ENCODE measurements at regions of chr11 and their contacts with region 1.

Region 1: GRCh38 chr11:107770551-107770951 is 58.7 kb upstream of the SLN start:
- DNase-seq: no peak
- ATAC-seq: no peak
- H3K4me3 ChIP-seq: no peak overlapping the region
- H3K27ac ChIP-seq: no peak overlapping the region
- H3K4me1 ChIP-seq: no peaks in the 10 kb centered on the region; a peak in 1 of 5 replicates
- H3K27me3 ChIP-seq: peaks cover 0 to 14% of the 10 kb centered on the region in 2 experiments; a peak in 2 of 5 replicates
- CTCF ChIP-seq: no peak
- EP300 ChIP-seq: no peak
- POLR2A ChIP-seq: no peak
- RAD21 ChIP-seq: no peak

Region 2: DNA sequence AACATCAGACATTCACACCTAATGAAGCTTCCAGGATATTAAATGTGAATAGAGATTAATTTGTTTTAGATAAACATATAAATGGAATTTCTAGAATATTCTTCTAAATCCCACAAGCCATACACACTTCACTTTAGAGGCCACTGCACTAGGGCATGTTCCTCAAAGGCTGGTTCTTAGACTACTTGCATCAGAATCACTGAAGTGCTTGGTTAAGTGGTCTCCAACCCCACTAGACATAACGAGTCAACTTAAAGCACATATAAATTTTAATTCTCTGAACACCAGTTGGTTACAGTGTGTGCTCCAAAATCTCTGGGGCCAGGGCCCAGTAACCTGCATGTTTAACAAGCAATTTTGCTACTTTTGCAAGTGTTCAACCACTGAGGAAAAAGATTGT is 197.1 kb before region 1 on chr11:
- CTCF ChIA-PET with region 1: interaction called, 3 read pairs
- POLR2A ChIA-PET with region 1: no interaction called
- in situ Hi-C with region 1: no loop called
- intact Hi-C with region 1: loop called (anchors 5 kb)
- DNase-seq: no peak
- ATAC-seq: no peak
- H3K4me3 ChIP-seq: no peak overlapping the region
- H3K27ac ChIP-seq: no peak overlapping the region
- H3K4me1 ChIP-seq: peaks cover 0 to 4% of the 10 kb centered on the region in 2 experiments; a peak in 1 of 5 replicates
- H3K27me3 ChIP-seq: no peaks in the 10 kb centered on the region
- CTCF ChIP-seq: no peak
- EP300 ChIP-seq: no peak
- POLR2A ChIP-seq: no peak
- RAD21 ChIP-seq: no peak

Region 3: DNA sequence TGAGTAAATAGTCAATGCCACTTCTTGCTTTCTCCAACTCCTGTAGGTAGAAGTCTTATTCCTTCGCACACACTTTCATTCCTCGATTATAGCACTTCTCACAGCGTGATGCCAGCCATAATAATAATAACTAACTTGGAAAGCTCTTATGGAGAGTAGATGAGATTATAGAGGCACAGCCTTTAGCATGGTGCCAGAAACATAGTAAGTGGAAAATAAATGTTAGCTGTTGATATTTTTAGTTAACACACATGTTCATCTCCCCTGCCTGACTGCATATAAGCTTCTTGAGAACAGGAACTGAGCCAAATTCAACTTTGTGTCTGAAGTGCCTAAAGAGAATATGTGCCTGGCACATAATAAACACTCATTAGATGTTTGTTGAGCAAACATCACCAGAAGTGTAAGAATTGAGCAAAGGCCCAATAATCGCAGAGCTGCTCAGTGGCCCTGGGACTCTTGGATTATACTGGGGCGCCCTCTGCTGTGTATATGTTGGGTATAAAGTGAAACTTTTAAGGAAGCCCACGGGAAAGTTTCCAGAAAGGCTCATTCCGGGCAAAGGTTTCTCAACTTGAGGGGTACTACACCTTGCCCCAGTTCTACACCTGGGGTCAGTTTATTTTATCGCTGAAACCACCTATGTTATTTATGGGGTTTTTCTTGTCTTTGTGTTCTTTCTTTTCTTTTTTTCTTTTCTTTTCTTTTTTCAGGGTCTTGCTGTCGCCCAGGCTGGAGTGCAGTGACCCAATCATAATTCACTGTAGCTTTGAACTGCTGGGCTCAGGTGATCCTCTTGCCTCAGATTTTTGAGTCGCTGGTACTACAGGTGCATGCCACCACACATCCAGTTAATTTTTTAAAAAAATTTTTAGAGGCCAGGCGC is 81.0 kb before region 1 on chr11:
- CTCF ChIA-PET with region 1: no interaction called
- POLR2A ChIA-PET with region 1: no interaction called
- in situ Hi-C with region 1: no loop called
- intact Hi-C with region 1: loop called (anchors 10 kb)
- DNase-seq: peak; percentile 33 to 78 (median 46)
- ATAC-seq: peak; percentile 94
- H3K4me3 ChIP-seq: no peak overlapping the region
- H3K27ac ChIP-seq: no peak overlapping the region
- H3K4me1 ChIP-seq: no peaks in the 10 kb centered on the region
- H3K27me3 ChIP-seq: no peaks in the 10 kb centered on the region
- CTCF ChIP-seq: peak; percentile 64 to 86 (median 79)
- EP300 ChIP-seq: no peak
- POLR2A ChIP-seq: no peak
- RAD21 ChIP-seq: peak; percentile 93 to 95

Region 4: DNA sequence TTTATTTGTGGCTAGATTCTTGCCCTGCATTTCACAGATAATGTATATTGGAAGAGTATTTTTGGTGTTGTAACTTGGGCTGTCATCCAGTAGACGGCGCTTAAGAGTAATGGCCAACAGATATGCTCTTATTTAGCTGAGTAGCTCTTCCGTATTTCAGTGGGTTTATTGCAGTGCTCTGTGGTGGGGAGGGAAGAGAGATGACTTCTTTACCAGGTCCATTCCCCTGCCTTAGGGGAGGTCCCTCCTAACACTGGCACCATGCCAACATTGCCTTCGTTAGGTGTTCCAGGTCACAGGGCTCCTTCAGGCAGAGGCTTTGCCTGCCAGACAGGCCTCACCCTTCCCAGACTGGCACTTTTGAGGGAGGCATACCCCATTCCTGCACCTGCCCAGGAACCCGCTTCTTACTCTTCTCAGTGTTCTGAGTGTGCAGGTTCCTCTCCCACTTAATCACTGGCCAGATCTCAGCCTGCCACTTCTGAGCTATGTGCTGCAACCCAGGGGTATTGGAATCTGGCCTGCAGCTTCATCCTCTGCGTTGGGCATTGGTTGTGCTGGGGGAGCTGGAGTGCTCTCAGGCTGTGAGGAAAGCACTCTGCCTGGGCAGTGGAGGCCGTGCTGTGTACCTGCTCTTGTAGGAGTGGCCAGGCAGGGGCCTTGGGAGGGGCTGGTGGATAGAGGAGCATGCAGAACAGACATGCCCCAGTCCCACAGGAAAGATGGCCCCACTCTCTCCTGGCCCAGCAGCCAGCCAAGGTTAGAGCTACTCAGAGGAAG is 29.3 kb before region 1 on chr11:
- CTCF ChIA-PET with region 1: no interaction called
- POLR2A ChIA-PET with region 1: no interaction called
- in situ Hi-C with region 1: no loop called
- intact Hi-C with region 1: loop called (anchors 1 kb)
- DNase-seq: peak; percentile 19 to 68 (median 35)
- ATAC-seq: peak; percentile 96
- H3K4me3 ChIP-seq: no peak overlapping the region
- H3K27ac ChIP-seq: no peak overlapping the region
- H3K4me1 ChIP-seq: no peaks in the 10 kb centered on the region
- H3K27me3 ChIP-seq: no peaks in the 10 kb centered on the region; a peak in 1 of 5 replicates
- CTCF ChIP-seq: peak; percentile 79 to 87 (median 85)
- EP300 ChIP-seq: no peak
- POLR2A ChIP-seq: no peak
- RAD21 ChIP-seq: peak; percentile 59 to 90

Region 5: DNA sequence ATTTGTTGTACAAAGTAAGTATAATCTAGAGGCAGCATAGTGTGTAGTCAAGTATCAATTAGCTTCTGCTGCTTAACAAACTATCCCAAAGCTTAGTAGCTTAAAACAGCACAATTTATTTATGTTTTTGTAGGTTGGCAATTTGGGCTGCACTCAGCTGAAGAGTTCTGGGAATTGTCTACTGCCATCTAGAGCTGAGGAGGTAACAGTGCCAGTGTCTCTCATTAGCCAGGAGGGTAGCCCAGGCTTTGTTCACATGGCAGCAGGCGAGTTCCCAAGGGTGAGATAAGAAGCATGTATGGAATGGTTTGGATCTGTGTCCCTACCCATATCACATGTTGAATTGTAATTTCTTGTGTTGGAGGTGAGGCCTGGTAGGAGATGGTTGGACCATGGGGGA is 12.9 kb before region 1 on chr11:
- CTCF ChIA-PET with region 1: no interaction called
- POLR2A ChIA-PET with region 1: no interaction called
- in situ Hi-C with region 1: no loop called
- intact Hi-C with region 1: no loop called
- DNase-seq: no peak
- ATAC-seq: peak; percentile 65; the same call in 2 of the 3 replicates
- H3K4me3 ChIP-seq: no peak overlapping the region
- H3K27ac ChIP-seq: no peak overlapping the region
- H3K4me1 ChIP-seq: peaks cover 4 to 7% of the 10 kb centered on the region in 2 experiments; a peak in 3 of 5 replicates
- H3K27me3 ChIP-seq: no peaks in the 10 kb centered on the region
- CTCF ChIP-seq: peak in 1 of 3 experiments; percentile 18; a peak in 1 of 6 replicates
- EP300 ChIP-seq: no peak
- POLR2A ChIP-seq: no peak
- RAD21 ChIP-seq: no peak

Region 6: GRCh38 chr11:107882095-107882820 is 111.7 kb after region 1 on chr11:
- CTCF ChIA-PET with region 1: no interaction called
- POLR2A ChIA-PET with region 1: no interaction called
- in situ Hi-C with region 1: no loop called
- intact Hi-C with region 1: no loop called
- DNase-seq: peak in 1 of 4 experiments; percentile 6
- ATAC-seq: no peak
- H3K4me3 ChIP-seq: no peak overlapping the region
- H3K27ac ChIP-seq: no peak overlapping the region
- H3K4me1 ChIP-seq: no peaks in the 10 kb centered on the region
- H3K27me3 ChIP-seq: peaks cover 0 to 8% of the 10 kb centered on the region in 2 experiments; a peak in 3 of 5 replicates
- CTCF ChIP-seq: no peak
- EP300 ChIP-seq: no peak
- POLR2A ChIP-seq: no peak
- RAD21 ChIP-seq: no peak